B cell (primary cell): ENCODE measurements at regions of chr16 and their contacts with region 1.

Region 1: DNA sequence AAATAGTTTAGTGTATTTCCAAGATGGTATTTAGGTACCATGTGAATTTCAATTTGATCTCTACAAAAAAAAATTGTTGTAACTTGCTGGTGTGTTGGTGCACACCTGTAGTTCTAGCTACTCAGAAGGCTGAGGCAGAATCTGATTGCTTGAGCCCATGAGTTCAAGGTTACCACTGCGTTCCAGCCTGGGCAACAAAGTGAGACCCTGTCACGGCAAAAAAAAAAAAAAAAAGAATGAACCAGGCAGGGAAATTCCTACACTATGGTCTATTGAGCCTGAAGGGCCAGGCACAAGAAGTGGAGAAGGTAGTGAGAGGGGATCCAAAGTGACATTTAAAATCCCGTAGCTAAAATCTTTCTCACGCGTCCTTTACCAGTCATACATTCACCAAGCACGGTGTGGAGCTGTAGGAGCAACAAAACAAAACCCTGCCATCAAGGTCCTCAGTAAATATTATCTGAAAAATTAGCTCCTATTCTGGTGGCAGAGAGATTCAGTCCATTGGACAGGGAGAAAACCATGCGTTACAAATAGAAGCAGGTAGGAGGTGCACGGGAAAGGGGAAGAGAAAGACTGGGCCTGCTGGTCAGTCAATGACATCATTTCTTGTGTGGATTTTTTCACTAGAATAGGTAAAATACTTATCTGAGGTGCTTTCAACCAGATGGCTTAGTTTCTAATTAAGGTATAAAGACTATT is 27.3 kb downstream of the TXNDC11 start:
- DNase-seq: no peak
- ATAC-seq: no peak
- H3K4me3 ChIP-seq: no peak overlapping the region
- H3K4me3 Mint-ChIP-seq: no peak overlapping the region
- H3K27ac ChIP-seq: no peak overlapping the region
- H3K27ac Mint-ChIP-seq: peak overlapping the region; percentile 42
- H3K4me1 ChIP-seq: peaks cover 0 to 7% of the 10 kb centered on the region in 2 donors
- H3K4me1 Mint-ChIP-seq: peaks cover 25% of the 10 kb centered on the region
- H3K27me3 ChIP-seq: no peaks in the 10 kb centered on the region
- H3K27me3 Mint-ChIP-seq: no peaks in the 10 kb centered on the region
- CTCF ChIP-seq: no peak

Region 2: GRCh38 chr16:10957771-10958486 is 757.5 kb before region 1 on chr16:
- CTCF ChIA-PET with region 1: interaction called, 30 read pairs
- POLR2A ChIA-PET with region 1: no interaction called
- intact Hi-C with region 1: loop called (anchors 1 kb)
- DNase-seq: peak; percentile 31
- ATAC-seq: peak; percentile 63
- H3K4me3 ChIP-seq: no peak overlapping the region
- H3K4me3 Mint-ChIP-seq: peak overlapping the region; percentile 53
- H3K27ac ChIP-seq: peak overlapping the region in 1 of 2 donors; percentile 22
- H3K27ac Mint-ChIP-seq: peak overlapping the region; percentile 62
- H3K4me1 ChIP-seq: peaks cover 21 to 30% of the 10 kb centered on the region in 2 donors
- H3K4me1 Mint-ChIP-seq: peaks cover 49% of the 10 kb centered on the region
- H3K27me3 ChIP-seq: no peaks in the 10 kb centered on the region
- H3K27me3 Mint-ChIP-seq: no peaks in the 10 kb centered on the region
- CTCF ChIP-seq: no peak

Region 3: GRCh38 chr16:11526655-11527350 is 188.6 kb before region 1 on chr16:
- CTCF ChIA-PET with region 1: interaction called, 126 read pairs
- POLR2A ChIA-PET with region 1: no interaction called
- intact Hi-C with region 1: loop called (anchors 1 kb)
- DNase-seq: no peak
- ATAC-seq: no peak
- H3K4me3 ChIP-seq: no peak overlapping the region
- H3K4me3 Mint-ChIP-seq: no peak overlapping the region
- H3K27ac ChIP-seq: no peak overlapping the region
- H3K27ac Mint-ChIP-seq: no peak overlapping the region
- H3K4me1 ChIP-seq: no peaks in the 10 kb centered on the region
- H3K4me1 Mint-ChIP-seq: peaks cover 3% of the 10 kb centered on the region
- H3K27me3 ChIP-seq: peaks cover 0 to 4% (median 0%) of the 10 kb centered on the region in 4 experiments
- H3K27me3 Mint-ChIP-seq: peaks cover 8% of the 10 kb centered on the region
- CTCF ChIP-seq: no peak

Region 4: DNA sequence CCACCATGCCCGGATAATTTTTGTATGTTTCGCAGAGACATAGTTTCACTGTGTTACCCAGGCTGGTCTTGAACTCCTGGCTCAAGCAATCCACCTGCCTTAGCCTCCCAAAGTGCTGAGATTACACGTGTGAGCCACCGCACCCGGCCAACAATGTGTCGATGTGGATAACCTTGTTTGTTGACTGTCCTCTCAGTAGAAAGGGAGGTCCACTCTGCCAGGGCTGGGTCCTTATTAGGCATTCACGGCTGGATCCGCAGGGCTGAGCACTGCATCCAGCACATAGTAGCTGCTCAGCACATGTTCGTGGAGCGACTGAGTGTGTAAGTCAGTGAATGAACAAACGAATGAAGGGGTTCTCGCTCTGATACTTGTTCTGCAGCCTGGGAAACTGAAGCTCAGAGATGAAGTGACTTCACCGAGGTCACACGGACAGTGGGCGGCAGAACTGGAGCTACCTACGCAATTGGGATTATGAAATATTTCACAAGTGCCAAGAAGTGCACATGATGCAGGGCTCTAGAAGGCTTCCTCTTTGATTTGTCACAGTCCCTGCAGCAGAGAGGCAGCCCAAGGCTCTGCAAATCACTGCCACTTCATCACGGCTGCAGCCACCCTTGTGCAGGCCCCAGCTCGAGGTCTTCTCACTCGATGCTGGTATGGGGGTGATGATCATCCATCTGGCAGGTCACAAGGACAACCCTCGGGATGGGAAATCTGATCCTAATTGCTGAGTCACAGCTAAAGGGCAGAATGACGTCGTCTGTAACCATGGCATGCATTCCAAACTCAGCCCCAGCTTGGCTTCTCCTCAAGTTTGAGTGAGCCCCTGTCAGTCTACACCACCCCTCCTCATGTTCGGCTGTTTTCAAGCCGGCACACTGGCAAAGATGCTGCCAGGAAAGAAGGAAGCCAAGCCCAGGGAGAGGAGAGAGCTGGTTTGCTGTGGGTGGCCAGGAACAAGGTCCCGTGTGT is 75.2 kb before region 1 on chr16:
- CTCF ChIA-PET with region 1: interaction called, 69 read pairs
- POLR2A ChIA-PET with region 1: interaction called, 7 read pairs
- intact Hi-C with region 1: loop called (anchors 1 kb)
- DNase-seq: no peak
- ATAC-seq: no peak
- H3K4me3 ChIP-seq: no peak overlapping the region
- H3K4me3 Mint-ChIP-seq: no peak overlapping the region
- H3K27ac ChIP-seq: no peak overlapping the region
- H3K27ac Mint-ChIP-seq: no peak overlapping the region
- H3K4me1 ChIP-seq: peaks cover 7 to 9% of the 10 kb centered on the region in 2 donors
- H3K4me1 Mint-ChIP-seq: peaks cover 6% of the 10 kb centered on the region
- H3K27me3 ChIP-seq: no peaks in the 10 kb centered on the region
- H3K27me3 Mint-ChIP-seq: no peaks in the 10 kb centered on the region
- CTCF ChIP-seq: no peak

Region 5: GRCh38 chr16:11689031-11689761 is 26.2 kb before region 1 on chr16:
- CTCF ChIA-PET with region 1: interaction called, 36 read pairs
- POLR2A ChIA-PET with region 1: no interaction called
- intact Hi-C with region 1: no loop called
- DNase-seq: peak; percentile 87
- ATAC-seq: peak; percentile 96
- H3K4me3 ChIP-seq: peak overlapping the region in 1 of 5 experiments; percentile 49
- H3K4me3 Mint-ChIP-seq: peak overlapping the region; percentile 88
- H3K27ac ChIP-seq: peak overlapping the region; percentile 80 to 89
- H3K27ac Mint-ChIP-seq: peak overlapping the region; percentile 98
- H3K4me1 ChIP-seq: peaks cover 70 to 71% of the 10 kb centered on the region in 2 donors
- H3K4me1 Mint-ChIP-seq: peaks cover 76% of the 10 kb centered on the region
- H3K27me3 ChIP-seq: no peaks in the 10 kb centered on the region
- H3K27me3 Mint-ChIP-seq: no peaks in the 10 kb centered on the region
- CTCF ChIP-seq: no peak

Region 6: GRCh38 chr16:11797166-11797956 is 82.0 kb after region 1 on chr16 and contains the start of gene ZC3H7A:
- CTCF ChIA-PET with region 1: interaction called, 13 read pairs
- POLR2A ChIA-PET with region 1: no interaction called
- intact Hi-C with region 1: no loop called
- DNase-seq: peak; percentile 97
- ATAC-seq: peak; percentile 97
- H3K4me3 ChIP-seq: peak within 1 kb of the TSS; percentile 81 to 99 (median 87)
- H3K4me3 Mint-ChIP-seq: peak within 1 kb of the TSS; percentile 89
- H3K27ac ChIP-seq: peak within 1 kb of the TSS; percentile 93 to 96
- H3K27ac Mint-ChIP-seq: peak within 1 kb of the TSS; percentile 98
- H3K4me1 ChIP-seq: peaks cover 40 to 43% of the 10 kb centered on the region in 2 donors
- H3K4me1 Mint-ChIP-seq: peaks cover 67% of the 10 kb centered on the region
- H3K27me3 ChIP-seq: no peaks in the 10 kb centered on the region
- H3K27me3 Mint-ChIP-seq: no peaks in the 10 kb centered on the region
- CTCF ChIP-seq: peak; percentile 65
- total RNA-seq, gene ZC3H7A: 113 and 126 TPM in 2 replicates